ENCODE measurements at regions of chr2 and their contacts with region 1.

Region 1: DNA sequence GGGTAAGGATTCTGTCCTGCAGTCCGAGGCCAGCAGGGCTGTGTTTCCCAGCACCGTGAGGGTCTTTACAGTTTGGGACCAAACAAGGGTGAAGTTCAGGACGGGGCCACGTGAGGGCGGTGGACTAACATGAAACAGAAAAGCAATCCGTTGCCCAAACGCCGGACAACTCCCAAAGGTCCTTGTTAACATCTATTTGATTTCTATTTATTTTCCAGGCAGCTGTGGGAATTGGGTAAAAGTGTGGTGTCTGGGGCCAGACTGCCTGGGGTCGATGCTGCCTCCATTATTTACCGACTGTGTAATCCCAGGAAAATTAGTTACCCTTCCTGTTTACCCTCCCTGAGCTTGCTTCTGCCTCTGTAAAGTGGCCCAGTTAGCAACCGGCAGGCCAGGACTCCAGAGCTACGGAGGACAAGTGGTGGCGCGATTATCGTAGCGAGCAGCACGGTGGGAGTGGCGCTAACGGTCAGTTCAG is 66.3 kb upstream of the TCF7L1 start:
- DNase-seq: peak; percentile 83
- ATAC-seq: peak; percentile 86
- H3K4me3 ChIP-seq: peak overlapping the region; percentile 57; the same call in 1 of the 2 replicates
- H3K27ac ChIP-seq: no peak overlapping the region
- H3K4me1 ChIP-seq: peaks cover 10% of the 10 kb centered on the region; the same call in 1 of the 2 replicates
- H3K27me3 ChIP-seq: no peaks in the 10 kb centered on the region
- CTCF ChIP-seq: peak; percentile 92

Region 2: GRCh38 chr2:85162746-85163301 is 95.9 kb after region 1 on chr2:
- CTCF ChIA-PET with region 1: no interaction called
- POLR2A ChIA-PET with region 1: no interaction called
- intact Hi-C with region 1: no loop called
- DNase-seq: no peak
- ATAC-seq: no peak
- H3K4me3 ChIP-seq: no peak overlapping the region
- H3K27ac ChIP-seq: no peak overlapping the region
- H3K4me1 ChIP-seq: no peaks in the 10 kb centered on the region
- H3K27me3 ChIP-seq: no peaks in the 10 kb centered on the region
- CTCF ChIP-seq: no peak

Region 3: DNA sequence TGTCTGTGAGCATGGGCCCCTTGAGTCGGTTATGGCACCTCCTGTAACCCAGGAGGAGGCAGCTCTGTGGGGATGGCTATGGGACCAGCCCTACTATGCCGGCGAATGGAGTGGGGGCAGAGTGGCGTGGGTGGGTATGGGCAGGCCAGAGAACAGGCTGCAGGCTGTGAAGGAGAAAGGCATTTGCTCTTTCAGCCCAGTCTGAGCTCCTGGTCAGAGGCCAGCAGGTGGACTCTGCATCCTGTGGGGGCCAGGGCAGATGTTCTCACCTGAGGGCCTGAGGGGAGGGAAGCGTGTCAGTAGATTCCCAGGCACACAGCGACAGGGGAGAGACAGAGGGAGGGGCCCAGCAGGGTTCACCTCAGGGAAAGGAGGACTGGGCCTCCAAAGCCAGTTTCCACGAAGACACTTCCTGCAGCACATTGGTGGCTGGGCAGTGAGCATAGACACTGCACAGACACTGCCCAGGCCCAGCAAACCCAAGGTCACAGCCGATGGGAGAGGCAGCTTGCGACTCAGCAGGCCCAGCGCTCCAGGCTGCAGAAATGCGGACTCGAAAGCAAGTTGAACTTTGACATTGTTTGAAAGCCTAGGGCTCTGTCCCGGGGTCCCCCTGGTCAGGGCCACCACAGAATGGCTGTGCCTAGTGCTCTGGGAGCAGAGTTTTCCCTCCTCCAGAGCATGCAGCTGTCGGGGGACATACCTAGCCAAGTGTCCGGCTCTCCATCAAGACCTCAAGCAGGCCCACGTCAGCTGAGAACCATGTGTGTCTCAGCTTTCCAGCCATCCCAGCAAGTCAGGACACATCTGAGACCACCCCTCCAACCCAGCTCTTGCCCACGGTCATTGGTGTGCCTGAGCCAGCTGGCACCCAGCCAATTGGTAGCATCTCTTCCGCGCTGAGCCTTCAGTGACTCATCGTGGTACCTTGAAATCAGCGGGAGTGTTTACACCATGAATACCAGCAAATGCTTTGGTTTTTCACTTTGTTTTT is 207.1 kb after region 1 on chr2:
- CTCF ChIA-PET with region 1: no interaction called
- POLR2A ChIA-PET with region 1: no interaction called
- intact Hi-C with region 1: no loop called
- DNase-seq: peak; percentile 67
- ATAC-seq: peak; percentile 51
- H3K4me3 ChIP-seq: no peak overlapping the region
- H3K27ac ChIP-seq: no peak overlapping the region
- H3K4me1 ChIP-seq: peaks cover 6% of the 10 kb centered on the region
- H3K27me3 ChIP-seq: no peaks in the 10 kb centered on the region
- CTCF ChIP-seq: no peak

Region 4: GRCh38 chr2:85288244-85288725 is 221.4 kb after region 1 on chr2:
- CTCF ChIA-PET with region 1: interaction called, 9 read pairs
- POLR2A ChIA-PET with region 1: no interaction called
- intact Hi-C with region 1: loop called (anchors 1 kb)
- DNase-seq: peak; percentile 88
- ATAC-seq: peak; percentile 80
- H3K4me3 ChIP-seq: peak overlapping the region; percentile 14
- H3K27ac ChIP-seq: peak overlapping the region; percentile 71
- H3K4me1 ChIP-seq: peaks cover 27% of the 10 kb centered on the region
- H3K27me3 ChIP-seq: no peaks in the 10 kb centered on the region
- CTCF ChIP-seq: no peak